Panc1 (cell line): ENCODE measurements at regions of chr4 and their contacts with region 1.

Region 1: DNA sequence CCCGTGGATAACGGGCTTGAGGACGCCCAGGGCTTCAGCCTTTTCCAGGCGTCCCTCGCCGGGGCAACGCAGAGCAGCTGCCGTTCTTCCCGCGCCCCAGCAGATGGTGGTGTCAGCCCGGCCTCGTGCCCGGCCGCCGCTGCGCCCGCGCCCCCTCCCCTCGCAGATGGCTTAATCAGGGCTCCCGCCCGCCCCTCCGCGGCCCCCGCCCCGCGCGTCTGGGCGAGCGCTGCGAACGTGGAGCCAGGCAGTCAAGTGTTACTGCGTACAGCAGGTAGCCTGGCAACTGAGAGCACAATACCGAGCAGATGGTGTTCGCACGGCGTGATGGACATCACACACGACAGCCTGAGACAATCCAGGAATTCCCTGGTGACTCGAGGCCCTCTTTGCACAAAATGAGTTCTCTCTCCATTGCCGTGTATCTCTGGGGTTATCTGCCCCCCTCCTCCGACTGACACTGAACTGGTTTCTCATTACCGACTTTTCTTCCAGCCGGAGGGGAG is 69.3 kb downstream of the MGST2 start:
- DNase-seq: no peak
- ATAC-seq: peak; percentile 97
- H3K4me3 ChIP-seq: peak overlapping the region; percentile 31 to 48
- H3K27ac ChIP-seq: peak overlapping the region; percentile 69
- H3K4me1 ChIP-seq: peaks cover 3% of the 10 kb centered on the region
- H3K27me3 ChIP-seq: no peaks in the 10 kb centered on the region
- CTCF ChIP-seq: peak; percentile 83

Region 2: DNA sequence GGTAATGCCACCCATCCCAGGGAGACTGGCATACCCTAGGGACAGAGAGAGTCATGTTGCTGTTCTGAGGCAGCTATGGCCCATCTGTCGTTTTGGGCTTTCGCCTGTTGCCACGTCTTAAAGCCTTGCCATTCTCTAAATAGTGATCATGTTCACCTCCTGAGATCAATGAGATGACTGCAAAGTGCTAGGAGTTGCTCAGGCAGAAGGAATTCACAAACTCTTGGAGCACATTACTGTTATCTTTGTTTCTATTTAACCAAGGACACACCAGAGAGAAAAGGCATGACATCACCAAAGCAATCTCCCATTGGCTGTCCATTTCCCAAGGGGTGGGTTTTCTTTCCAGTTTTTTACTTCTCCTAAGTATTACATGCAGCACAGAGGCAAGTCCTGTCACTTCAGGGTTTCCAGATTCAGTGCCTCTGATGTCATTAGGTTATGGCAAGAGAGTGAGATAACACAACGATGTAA is 141.8 kb before region 1 on chr4:
- CTCF ChIA-PET with region 1: no interaction called
- POLR2A ChIA-PET with region 1: no interaction called
- in situ Hi-C with region 1: no loop called
- intact Hi-C with region 1: no loop called
- DNase-seq: no peak
- ATAC-seq: no peak
- H3K4me3 ChIP-seq: no peak overlapping the region
- H3K27ac ChIP-seq: no peak overlapping the region
- H3K4me1 ChIP-seq: no peaks in the 10 kb centered on the region
- H3K27me3 ChIP-seq: no peaks in the 10 kb centered on the region
- CTCF ChIP-seq: no peak

Region 3: GRCh38 chr4:140260227-140260626 is 525.3 kb after region 1 on chr4:
- CTCF ChIA-PET with region 1: no interaction called
- POLR2A ChIA-PET with region 1: no interaction called
- in situ Hi-C with region 1: no loop called
- intact Hi-C with region 1: loop called (anchors 10 kb)
- DNase-seq: peak; percentile 54
- ATAC-seq: no peak
- H3K4me3 ChIP-seq: no peak overlapping the region
- H3K27ac ChIP-seq: no peak overlapping the region
- H3K4me1 ChIP-seq: no peaks in the 10 kb centered on the region
- H3K27me3 ChIP-seq: no peaks in the 10 kb centered on the region
- CTCF ChIP-seq: no peak